ENCODE measurements at regions of chr1 and their contacts with region 1.

Region 1: GRCh38 chr1:9867408-9868243 is 42.4 kb downstream of the CTNNBIP1 start:
- DNase-seq: peak; percentile 82 to 94 (median 88)
- ATAC-seq: peak; percentile 96
- H3K4me3 ChIP-seq: no peak overlapping the region
- H3K4me1 ChIP-seq: no peaks in the 10 kb centered on the region
- CTCF ChIP-seq: peak; percentile 97

Region 2: DNA sequence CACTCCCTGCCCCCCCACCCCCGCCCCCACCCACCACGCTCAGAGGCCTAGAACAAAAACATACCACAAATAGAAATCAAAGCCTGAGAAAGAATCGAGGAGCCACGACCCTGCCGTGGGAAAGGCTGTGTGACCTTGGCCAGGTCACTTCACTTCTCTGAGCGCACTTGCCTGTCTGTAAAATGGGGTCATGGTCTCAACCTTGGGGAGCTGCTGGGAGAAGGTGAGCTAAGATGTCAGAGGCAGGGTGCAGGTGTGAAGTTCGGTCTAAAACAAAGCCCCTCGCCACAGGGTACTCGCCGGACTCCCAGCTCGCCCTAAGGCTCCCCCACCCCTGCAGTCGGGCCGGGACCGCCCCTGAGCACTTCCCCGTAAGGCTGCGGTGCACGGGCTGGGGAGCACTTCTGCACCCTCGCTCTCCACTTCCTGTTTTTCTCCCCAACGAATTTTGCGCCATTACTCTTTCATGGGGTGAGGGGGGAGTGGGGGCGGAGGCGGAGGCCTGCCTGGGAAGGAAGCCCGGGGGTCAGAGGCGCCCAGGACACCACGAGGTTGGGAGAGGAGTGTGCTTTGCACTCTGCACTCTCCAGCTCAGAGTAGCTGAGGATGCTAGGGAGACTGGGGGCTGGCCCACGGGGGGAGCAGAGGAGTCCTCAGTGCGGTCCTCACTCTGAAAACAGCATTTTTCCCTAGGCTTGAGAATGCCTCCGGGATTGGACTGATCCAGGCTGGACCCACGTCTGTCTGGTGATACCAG is 238.0 kb before region 1 on chr1:
- intact Hi-C with region 1: loop called in 1 of 2 experiments (anchors 10 kb)
- DNase-seq: peak; percentile 60 to 91 (median 69)
- ATAC-seq: peak; percentile 69
- H3K4me3 ChIP-seq: no peak overlapping the region
- H3K4me1 ChIP-seq: peaks cover 3% of the 10 kb centered on the region
- CTCF ChIP-seq: no peak

Region 3: DNA sequence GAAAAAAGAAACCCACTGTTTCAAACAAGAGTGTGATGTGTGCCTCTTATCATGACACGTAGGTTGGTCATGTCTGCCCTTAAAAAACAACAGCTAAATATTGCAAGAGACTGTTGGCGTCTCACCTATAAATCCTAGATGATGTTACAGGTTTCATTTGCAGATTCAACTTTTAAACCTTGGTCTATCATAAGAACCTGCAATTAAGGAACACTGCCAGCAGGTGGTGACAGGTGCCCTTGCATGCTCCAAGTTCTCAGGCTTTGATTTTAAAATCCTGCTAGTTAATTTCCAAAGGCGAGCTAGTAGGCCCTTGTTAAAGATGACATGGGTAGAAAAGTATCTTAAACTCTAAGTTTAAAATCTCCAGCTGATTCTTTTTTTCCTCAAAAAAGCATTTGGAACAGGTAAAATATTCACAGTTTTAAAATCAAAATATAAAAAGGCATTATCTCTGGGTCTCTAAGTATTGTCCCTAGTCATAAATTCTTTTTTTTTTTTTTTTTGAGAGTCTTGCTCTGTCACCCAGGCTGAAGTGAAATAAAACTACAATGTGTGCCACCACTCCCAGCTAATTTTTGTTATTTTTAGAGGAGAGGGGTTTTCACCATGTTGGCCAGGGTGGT is 83.0 kb before region 1 on chr1:
- intact Hi-C with region 1: loop called (anchors 2 to 10 kb)
- DNase-seq: peak in 2 of 3 donors; percentile 49 to 83
- ATAC-seq: peak; percentile 84
- H3K4me3 ChIP-seq: no peak overlapping the region
- H3K4me1 ChIP-seq: no peaks in the 10 kb centered on the region
- CTCF ChIP-seq: peak; percentile 65

Region 4: DNA sequence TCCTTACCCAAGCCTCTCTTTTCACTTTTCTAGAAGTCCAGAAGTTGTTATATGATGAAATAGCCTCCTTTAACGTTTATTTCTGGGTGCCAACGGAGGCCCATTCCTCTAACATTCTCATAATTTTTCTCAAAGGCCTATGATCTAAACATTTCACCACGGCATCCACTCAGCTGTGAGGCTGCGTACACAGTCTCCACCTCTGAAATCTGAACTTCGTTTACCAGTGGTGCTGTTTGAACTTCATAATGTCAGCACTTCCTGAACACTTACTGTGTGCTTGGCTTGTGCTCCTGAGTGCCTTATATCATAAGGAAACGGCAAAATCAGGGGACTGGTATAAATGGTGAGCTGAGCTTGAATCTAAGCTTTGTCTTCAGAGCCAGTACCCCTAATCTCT is 117.4 kb after region 1 on chr1:
- intact Hi-C with region 1: no loop called
- DNase-seq: no peak
- ATAC-seq: no peak
- H3K4me3 ChIP-seq: no peak overlapping the region
- H3K4me1 ChIP-seq: no peaks in the 10 kb centered on the region
- CTCF ChIP-seq: no peak

Measured in mucosa of descending colon (tissue), 3 donors.